Right lobe of liver (tissue), 6 donors: ENCODE measurements at regions of chr17 and their contacts with region 1.

Region 1: GRCh38 chr17:27244491-27245223 is 49.3 kb upstream of the WSB1 start:
- DNase-seq: peak; percentile 55 to 74 (median 68)
- ATAC-seq: peak; percentile 69 to 79 (median 76)
- H3K4me3 ChIP-seq: peak overlapping the region in 1 of 3 donors; percentile 20
- H3K27ac ChIP-seq: peak overlapping the region; percentile 79 to 85 (median 85)
- H3K4me1 ChIP-seq: peaks cover 0 to 38% (median 26%) of the 10 kb centered on the region in 4 donors
- H3K27me3 ChIP-seq: no peaks in the 10 kb centered on the region
- CTCF ChIP-seq: no peak
- POLR2A ChIP-seq: peak; percentile 51

Region 2: GRCh38 chr17:27332485-27333409 is 88.1 kb after region 1 on chr17:
- intact Hi-C with region 1: loop called in 1 of 2 experiments (anchors 5 kb)
- DNase-seq: peak; percentile 98 to 99 (median 99)
- ATAC-seq: peak; percentile 93 to 97 (median 94)
- H3K4me3 ChIP-seq: peak overlapping the region; percentile 36 to 60 (median 59)
- H3K27ac ChIP-seq: peak overlapping the region; percentile 87 to 92 (median 90)
- H3K4me1 ChIP-seq: peaks cover 0 to 7% (median 0%) of the 10 kb centered on the region in 4 donors
- H3K27me3 ChIP-seq: no peaks in the 10 kb centered on the region
- CTCF ChIP-seq: peak; percentile 85 to 96 (median 92)
- POLR2A ChIP-seq: peak; percentile 57

Region 3: GRCh38 chr17:27339836-27340550 is 95.3 kb after region 1 on chr17:
- intact Hi-C with region 1: loop called in 1 of 2 experiments (anchors 5 kb)
- DNase-seq: no peak
- ATAC-seq: peak in 2 of 4 donors; percentile 14 to 66
- H3K4me3 ChIP-seq: no peak overlapping the region
- H3K27ac ChIP-seq: no peak overlapping the region
- H3K4me1 ChIP-seq: peaks cover 0 to 5% (median 0%) of the 10 kb centered on the region in 4 donors
- H3K27me3 ChIP-seq: no peaks in the 10 kb centered on the region
- CTCF ChIP-seq: no peak
- POLR2A ChIP-seq: no peak